Aorta (tissue), 5 donors: ENCODE measurements at regions of chr2 and their contacts with region 1.

Region 1: DNA sequence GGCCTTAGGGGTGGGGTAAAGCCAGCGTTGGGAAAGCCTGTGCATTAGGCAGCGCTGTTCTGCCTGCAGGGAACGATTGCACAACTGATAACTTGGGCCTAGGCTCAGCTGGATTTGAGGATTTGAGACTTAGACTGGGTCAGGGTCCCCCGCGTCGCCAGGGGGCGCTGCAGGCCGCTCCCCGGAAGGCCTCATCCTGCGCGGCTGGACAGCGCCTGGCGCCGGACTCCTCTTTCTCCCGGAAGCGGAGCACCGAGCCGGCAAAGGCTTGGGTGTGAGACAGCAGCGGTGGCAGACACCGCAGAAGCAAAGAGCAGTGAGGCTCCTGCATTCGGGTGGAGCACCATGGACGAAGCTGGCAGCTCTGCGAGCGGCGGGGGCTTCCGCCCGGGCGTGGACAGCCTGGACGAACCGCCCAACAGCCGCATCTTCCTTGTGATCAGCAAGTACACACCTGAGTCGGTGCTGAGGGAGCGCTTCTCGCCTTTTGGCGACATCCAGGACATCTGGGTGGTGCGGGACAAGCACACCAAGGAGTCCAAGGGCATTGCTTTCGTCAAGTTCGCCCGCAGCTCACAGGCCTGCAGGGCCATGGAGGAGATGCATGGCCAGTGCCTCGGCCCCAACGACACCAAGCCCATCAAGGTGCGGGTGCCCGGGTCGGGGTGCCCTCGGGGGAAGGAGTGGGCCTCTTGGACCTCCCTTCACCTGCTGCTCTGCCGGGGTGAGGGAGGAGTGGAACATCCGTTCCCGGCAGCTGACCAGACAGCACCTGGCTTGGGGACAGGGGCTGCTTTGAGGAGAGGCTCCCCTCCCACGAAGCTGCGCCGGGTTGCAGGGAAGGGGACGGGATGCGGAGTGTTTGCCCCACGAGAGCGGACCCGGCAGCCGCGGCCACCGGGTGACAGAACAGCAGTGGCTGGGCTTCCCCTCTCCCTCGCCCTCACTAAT is at the start of gene RBM45:
- DNase-seq: peak; percentile 95 to 97
- ATAC-seq: peak; percentile 99
- H3K4me3 ChIP-seq: peak within 1 kb of the TSS; percentile 69 to 83
- H3K27ac ChIP-seq: peak within 1 kb of the TSS in 1 of 2 donors; percentile 66
- H3K4me1 ChIP-seq: peaks cover 0 to 2% of the 10 kb centered on the region in 2 donors
- H3K27me3 ChIP-seq: no peaks in the 10 kb centered on the region
- total RNA-seq, gene RBM45: 12.9 TPM

Region 2: DNA sequence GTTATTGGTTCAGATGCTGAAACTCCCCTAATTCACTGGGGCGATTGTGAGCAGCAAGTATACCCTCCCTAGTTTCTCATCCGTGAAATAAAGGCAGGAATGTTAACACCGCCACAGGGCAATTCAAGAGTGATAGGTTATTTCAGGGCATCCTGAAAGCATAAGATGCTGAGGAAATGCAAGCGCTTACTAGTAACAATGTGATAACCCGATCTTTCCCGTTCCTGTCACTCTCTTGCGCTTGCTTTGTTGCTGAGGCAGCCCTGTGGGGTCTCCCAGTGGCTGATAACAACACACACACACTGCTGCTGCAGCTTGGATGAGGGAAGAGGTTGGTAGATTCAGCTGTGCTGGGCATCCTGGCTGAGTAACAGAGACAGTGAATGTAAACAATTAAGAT is 460.6 kb before region 1 on chr2:
- intact Hi-C with region 1: no loop called
- DNase-seq: no peak
- ATAC-seq: no peak
- H3K4me3 ChIP-seq: no peak overlapping the region
- H3K27ac ChIP-seq: no peak overlapping the region
- H3K4me1 ChIP-seq: no peaks in the 10 kb centered on the region
- H3K27me3 ChIP-seq: no peaks in the 10 kb centered on the region

Region 3: DNA sequence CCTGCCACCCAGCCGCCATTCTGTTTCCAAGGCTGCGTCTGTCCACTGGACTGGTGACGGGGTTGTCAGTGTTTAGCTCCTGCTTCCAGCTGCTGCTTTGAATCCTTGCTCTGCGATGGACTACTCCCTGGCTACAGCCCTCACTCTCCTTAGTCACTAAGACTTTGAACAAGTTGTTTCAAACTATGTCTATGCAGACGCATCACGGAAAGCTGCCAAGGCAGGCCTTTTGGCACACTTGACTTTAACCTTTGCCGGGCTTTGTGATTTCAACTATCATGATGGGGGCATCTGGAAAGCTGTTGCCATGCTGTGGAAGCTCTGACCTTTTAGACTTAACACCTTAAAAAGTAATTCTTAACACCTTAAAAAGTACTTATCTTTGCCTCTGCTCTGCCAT is 94.3 kb before region 1 on chr2:
- intact Hi-C with region 1: no loop called
- DNase-seq: no peak
- ATAC-seq: no peak
- H3K4me3 ChIP-seq: no peak overlapping the region
- H3K27ac ChIP-seq: no peak overlapping the region
- H3K4me1 ChIP-seq: no peaks in the 10 kb centered on the region
- H3K27me3 ChIP-seq: no peaks in the 10 kb centered on the region

Region 4: DNA sequence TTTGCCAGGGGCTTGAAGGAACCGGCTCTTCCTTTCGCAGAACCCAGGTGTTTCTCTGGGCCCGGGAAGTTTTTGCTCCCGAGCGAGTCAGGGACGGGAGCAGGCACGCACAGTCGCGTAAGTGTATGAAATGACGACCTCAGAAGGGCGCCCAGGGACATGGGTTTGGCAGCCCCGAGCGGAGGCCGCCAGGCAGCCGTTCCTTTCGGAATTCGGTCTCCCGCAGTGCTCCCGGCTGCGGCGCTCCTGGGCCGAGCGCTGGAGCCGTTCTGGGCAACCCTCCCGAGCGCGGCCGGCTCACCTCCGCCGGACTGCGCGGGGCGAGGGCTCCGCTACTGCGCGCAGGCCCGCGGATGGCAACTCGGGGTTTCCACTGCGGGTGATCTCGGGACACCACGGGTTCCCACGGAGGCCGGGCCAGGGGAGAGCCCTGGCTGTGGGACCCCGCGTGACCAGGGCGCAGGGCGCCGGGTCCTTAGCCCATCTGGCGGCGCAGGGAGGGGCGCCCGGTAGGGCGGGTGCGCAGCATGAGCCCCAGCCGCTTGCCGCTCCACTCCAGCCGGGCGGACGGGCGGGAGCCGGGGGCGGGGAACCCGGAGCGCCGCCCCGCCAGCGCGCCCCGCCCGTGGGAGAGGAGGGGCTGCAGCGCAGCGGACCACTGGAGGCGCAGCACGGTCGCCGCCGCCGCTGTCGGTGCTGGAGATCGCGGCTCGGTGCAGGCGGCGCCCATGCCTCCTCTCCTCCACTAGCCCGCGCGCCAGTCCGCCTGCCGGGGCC is 81.5 kb after region 1 on chr2 and contains the start of gene OSBPL6:
- intact Hi-C with region 1: loop called in 1 of 2 experiments (anchors 5 kb)
- DNase-seq: peak; percentile 85 to 92
- ATAC-seq: peak; percentile 97
- H3K4me3 ChIP-seq: peak within 1 kb of the TSS; percentile 73 to 78
- H3K27ac ChIP-seq: peak within 1 kb of the TSS; percentile 16 to 73
- H3K4me1 ChIP-seq: no peaks in the 10 kb centered on the region
- H3K27me3 ChIP-seq: no peaks in the 10 kb centered on the region
- total RNA-seq, gene OSBPL6: 2.1 to 2.4 TPM

Region 5: GRCh38 chr2:178414266-178415247 is 302.1 kb after region 1 on chr2:
- intact Hi-C with region 1: loop called in 1 of 2 experiments (anchors 10 kb)
- DNase-seq: peak; percentile 93
- ATAC-seq: peak; percentile 97
- H3K4me3 ChIP-seq: peak overlapping the region; percentile 53 to 66
- H3K27ac ChIP-seq: peak overlapping the region; percentile 50 to 83
- H3K4me1 ChIP-seq: no peaks in the 10 kb centered on the region
- H3K27me3 ChIP-seq: no peaks in the 10 kb centered on the region